ENCODE measurements at regions of chr16 and their contacts with region 1.

Region 1: GRCh38 chr16:11105038-11105903 is 150.7 kb downstream of the SOCS1 start:
- DNase-seq: peak; percentile 98
- ATAC-seq: peak; percentile 37
- H3K4me3 ChIP-seq: no peak overlapping the region
- H3K27ac ChIP-seq: peak overlapping the region; percentile 92
- H3K4me1 ChIP-seq: peaks cover 65% of the 10 kb centered on the region
- H3K27me3 ChIP-seq: no peaks in the 10 kb centered on the region
- CTCF ChIP-seq: no peak
- POLR2A ChIP-seq: no peak; the same call in 1 of the 2 replicates
- RAD21 ChIP-seq: 0 out of 2 replicates have a peak, but pooled peaks have one; percentile 3

Region 2: GRCh38 chr16:10971560-10971961 is 133.7 kb before region 1 on chr16:
- CTCF ChIA-PET with region 1: no interaction called
- POLR2A ChIA-PET with region 1: no interaction called
- dilution Hi-C with region 1: no loop called
- in situ Hi-C with region 1: no loop called
- intact Hi-C with region 1: loop called (anchors 1 kb)
- DNase-seq: peak; percentile 92
- ATAC-seq: peak; percentile 81
- H3K4me3 ChIP-seq: no peak overlapping the region
- H3K27ac ChIP-seq: peak overlapping the region; percentile 85
- H3K4me1 ChIP-seq: peaks cover 17% of the 10 kb centered on the region
- H3K27me3 ChIP-seq: no peaks in the 10 kb centered on the region
- CTCF ChIP-seq: peak; percentile 89
- POLR2A ChIP-seq: peak; percentile 58; the same call in 1 of the 2 replicates
- RAD21 ChIP-seq: peak; percentile 99

Region 3: DNA sequence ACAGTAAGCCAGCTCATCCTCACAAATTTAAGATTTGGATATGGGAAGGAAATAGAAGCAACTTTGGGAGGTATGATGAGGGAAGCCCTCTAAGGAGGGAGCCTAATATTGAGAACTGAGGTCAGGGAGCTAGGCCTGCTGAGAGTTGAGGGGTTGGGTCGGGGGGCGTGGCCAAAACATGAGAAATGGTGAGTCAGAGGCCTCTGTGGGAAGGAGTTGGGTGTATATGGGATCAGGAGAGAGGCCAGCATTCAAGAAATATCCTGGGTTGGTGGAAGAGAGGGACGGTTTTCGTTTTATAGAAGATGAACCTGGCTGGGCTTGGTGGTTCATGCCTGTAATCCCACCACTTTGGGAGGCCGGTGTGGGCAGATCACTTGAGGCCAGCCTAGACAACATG is 112.5 kb before region 1 on chr16:
- CTCF ChIA-PET with region 1: no interaction called
- POLR2A ChIA-PET with region 1: no interaction called
- dilution Hi-C with region 1: no loop called
- in situ Hi-C with region 1: no loop called
- intact Hi-C with region 1: loop called (anchors 5 kb)
- DNase-seq: peak; percentile 93
- ATAC-seq: peak; percentile 71
- H3K4me3 ChIP-seq: no peak overlapping the region
- H3K27ac ChIP-seq: peak overlapping the region; percentile 98
- H3K4me1 ChIP-seq: peaks cover 35% of the 10 kb centered on the region
- H3K27me3 ChIP-seq: no peaks in the 10 kb centered on the region
- CTCF ChIP-seq: no peak
- POLR2A ChIP-seq: peak; percentile 71
- RAD21 ChIP-seq: no peak

Region 4: GRCh38 chr16:11139326-11140097 is 34.2 kb after region 1 on chr16:
- CTCF ChIA-PET with region 1: no interaction called
- POLR2A ChIA-PET with region 1: no interaction called
- dilution Hi-C with region 1: no loop called
- in situ Hi-C with region 1: no loop called
- intact Hi-C with region 1: loop called (anchors 2 kb)
- DNase-seq: peak; percentile 44
- ATAC-seq: peak; percentile 73
- H3K4me3 ChIP-seq: no peak overlapping the region
- H3K27ac ChIP-seq: peak overlapping the region; percentile 72; the same call in 1 of the 2 replicates
- H3K4me1 ChIP-seq: peaks cover 34% of the 10 kb centered on the region
- H3K27me3 ChIP-seq: no peaks in the 10 kb centered on the region
- CTCF ChIP-seq: no peak
- POLR2A ChIP-seq: no peak
- RAD21 ChIP-seq: no peak

Region 5: DNA sequence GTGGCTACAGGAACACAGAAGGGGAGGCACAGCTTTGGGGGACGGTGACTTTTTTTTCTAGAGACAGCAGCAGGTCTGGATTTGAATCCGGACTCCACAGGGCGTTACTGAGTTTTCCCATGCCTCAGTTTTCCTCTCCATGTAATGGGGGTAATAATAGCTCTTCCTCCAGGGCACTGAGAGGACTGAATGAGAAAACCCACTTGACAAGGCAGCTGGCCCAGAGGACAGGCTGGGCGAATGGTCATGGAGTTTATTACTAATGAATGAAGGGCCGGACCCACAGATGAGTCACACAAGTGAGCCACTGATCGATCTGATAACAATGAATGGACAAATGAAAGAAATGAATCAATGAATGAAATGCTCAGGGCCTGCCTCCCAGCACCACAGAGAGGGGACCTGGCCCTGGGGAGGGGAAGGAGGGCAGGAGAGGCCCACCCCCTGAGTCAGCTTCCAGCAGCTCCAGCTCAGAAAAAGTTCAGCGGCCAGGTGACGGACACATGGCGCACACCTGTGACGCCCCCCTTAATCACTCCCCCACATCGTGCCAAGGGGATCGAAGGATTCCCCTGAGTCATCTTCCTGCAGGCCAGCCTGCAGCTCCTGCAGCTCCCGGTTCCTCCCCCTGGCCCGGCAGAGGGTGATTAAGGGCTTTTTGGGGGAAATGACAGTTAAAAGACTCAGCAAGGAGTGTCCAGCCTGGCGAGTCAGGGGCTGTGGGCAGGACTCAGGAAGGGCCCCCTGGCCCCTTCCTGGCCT is 96.4 kb after region 1 on chr16:
- CTCF ChIA-PET with region 1: no interaction called
- POLR2A ChIA-PET with region 1: no interaction called
- dilution Hi-C with region 1: no loop called
- in situ Hi-C with region 1: no loop called
- intact Hi-C with region 1: loop called (anchors 5 kb)
- DNase-seq: peak; percentile 93
- ATAC-seq: peak; percentile 77
- H3K4me3 ChIP-seq: no peak overlapping the region
- H3K27ac ChIP-seq: no peak overlapping the region; the same call in 1 of the 2 replicates
- H3K4me1 ChIP-seq: peaks cover 20% of the 10 kb centered on the region
- H3K27me3 ChIP-seq: no peaks in the 10 kb centered on the region; the same call in 1 of the 2 replicates
- CTCF ChIP-seq: no peak
- POLR2A ChIP-seq: no peak
- RAD21 ChIP-seq: peak; percentile 33

Region 6: GRCh38 chr16:11356573-11357331 is 251.5 kb after region 1 on chr16:
- CTCF ChIA-PET with region 1: no interaction called
- POLR2A ChIA-PET with region 1: no interaction called
- dilution Hi-C with region 1: no loop called
- in situ Hi-C with region 1: loop called (anchors 10 kb)
- intact Hi-C with region 1: loop called (anchors 5 kb)
- DNase-seq: peak; percentile 61
- ATAC-seq: peak; percentile 67
- H3K4me3 ChIP-seq: no peak overlapping the region
- H3K27ac ChIP-seq: peak overlapping the region; percentile 44; the same call in 1 of the 2 replicates
- H3K4me1 ChIP-seq: peaks cover 45% of the 10 kb centered on the region
- H3K27me3 ChIP-seq: no peaks in the 10 kb centered on the region
- CTCF ChIP-seq: peak; percentile 77
- POLR2A ChIP-seq: no peak
- RAD21 ChIP-seq: peak; percentile 80